GM12878 (cell line): ENCODE measurements at regions of chr10 and their contacts with region 1.

Region 1: DNA sequence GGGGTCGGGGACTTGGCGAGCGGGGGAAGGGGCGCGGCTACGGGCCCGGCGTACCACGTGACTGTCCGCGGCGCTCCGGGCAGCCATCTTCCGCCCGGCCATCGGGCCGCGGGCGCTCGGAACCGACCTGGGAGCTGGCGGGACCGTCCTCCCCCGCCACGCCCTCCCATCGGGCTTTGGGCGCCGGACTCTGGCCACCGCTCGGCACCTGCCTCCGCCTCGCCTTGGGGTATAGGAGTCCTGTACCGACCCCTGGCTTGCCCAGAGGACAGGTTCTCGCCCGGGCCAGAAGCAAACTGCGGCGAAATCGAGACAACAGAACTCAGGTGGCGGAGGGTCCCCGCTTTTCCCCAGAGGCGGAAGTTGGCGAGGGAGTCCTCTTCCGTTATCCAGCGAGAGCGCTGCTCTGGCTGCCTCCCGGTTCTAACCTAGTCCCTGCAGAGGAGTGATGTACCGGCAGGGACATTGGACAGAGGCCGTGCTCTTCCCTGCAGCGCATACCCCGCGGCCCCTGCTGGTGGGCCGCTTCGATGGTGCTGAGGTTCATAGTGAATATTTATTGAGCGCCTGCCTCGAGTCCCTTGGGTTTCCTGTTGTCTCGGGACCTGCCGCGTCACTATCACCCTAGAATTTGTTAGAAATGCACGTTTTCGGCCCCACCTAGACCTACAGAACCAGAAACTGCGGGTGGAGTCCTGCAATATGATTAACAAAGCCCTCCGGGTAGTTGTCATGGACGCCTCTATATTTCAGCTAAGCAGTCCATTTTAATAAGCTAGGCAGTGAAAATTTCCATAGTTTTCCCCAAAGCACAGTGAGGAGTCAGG is 1.3 kb upstream of the SGMS1 start:
- DNase-seq: no peak
- ATAC-seq: peak; percentile 69
- H3K4me3 ChIP-seq: peak overlapping the region; percentile 86
- H3K27ac ChIP-seq: peak overlapping the region; percentile 94
- H3K4me1 ChIP-seq: no peaks in the 10 kb centered on the region
- H3K27me3 ChIP-seq: no peaks in the 10 kb centered on the region
- CTCF ChIP-seq: peak; percentile 52 to 70 (median 56)
- EP300 ChIP-seq: no peak
- POLR2A ChIP-seq: peak; percentile 89
- RAD21 ChIP-seq: peak; percentile 52

Region 2: GRCh38 chr10:50362547-50363125 is 262.4 kb before region 1 on chr10:
- CTCF ChIA-PET with region 1: interaction called, 13 read pairs
- POLR2A ChIA-PET with region 1: interaction called, 5 read pairs
- RAD21 ChIA-PET with region 1: interaction called, 10 read pairs
- SMC1A ChIA-PET with region 1: interaction called, 7 read pairs
- in situ Hi-C with region 1: no loop called
- intact Hi-C with region 1: loop called (anchors 5 kb)
- DNase-seq: peak; percentile 79
- ATAC-seq: peak; percentile 90
- H3K4me3 ChIP-seq: peak overlapping the region; percentile 36
- H3K27ac ChIP-seq: peak overlapping the region; percentile 88
- H3K4me1 ChIP-seq: peaks cover 25% of the 10 kb centered on the region
- H3K27me3 ChIP-seq: no peaks in the 10 kb centered on the region
- CTCF ChIP-seq: no peak
- EP300 ChIP-seq: peak in 1 of 2 experiments; percentile 50; a peak in 1 of 4 replicates
- POLR2A ChIP-seq: no peak
- RAD21 ChIP-seq: no peak

Region 3: GRCh38 chr10:50540069-50540825 is 84.8 kb before region 1 on chr10:
- CTCF ChIA-PET with region 1: interaction called, 5 read pairs
- POLR2A ChIA-PET with region 1: interaction called, 6 read pairs
- RAD21 ChIA-PET with region 1: interaction called, 9 read pairs
- SMC1A ChIA-PET with region 1: interaction called, 26 read pairs
- in situ Hi-C with region 1: no loop called
- intact Hi-C with region 1: loop called (anchors 2 kb)
- DNase-seq: no peak
- ATAC-seq: peak; percentile 72
- H3K4me3 ChIP-seq: peak overlapping the region; percentile 42; the same call in 1 of the 2 replicates
- H3K27ac ChIP-seq: peak overlapping the region; percentile 86
- H3K4me1 ChIP-seq: peaks cover 51% of the 10 kb centered on the region
- H3K27me3 ChIP-seq: no peaks in the 10 kb centered on the region
- CTCF ChIP-seq: no peak
- EP300 ChIP-seq: peak in 1 of 2 experiments; percentile 36; a peak in 2 of 4 replicates
- POLR2A ChIP-seq: no peak
- RAD21 ChIP-seq: no peak

Region 4: GRCh38 chr10:50577681-50578350 is 47.3 kb before region 1 on chr10:
- CTCF ChIA-PET with region 1: interaction called, 5 read pairs
- POLR2A ChIA-PET with region 1: interaction called, 6 read pairs
- RAD21 ChIA-PET with region 1: interaction called, 14 read pairs
- SMC1A ChIA-PET with region 1: interaction called, 12 read pairs
- in situ Hi-C with region 1: no loop called
- intact Hi-C with region 1: no loop called
- DNase-seq: no peak
- ATAC-seq: peak; percentile 52
- H3K4me3 ChIP-seq: no peak overlapping the region
- H3K27ac ChIP-seq: no peak overlapping the region
- H3K4me1 ChIP-seq: no peaks in the 10 kb centered on the region
- H3K27me3 ChIP-seq: no peaks in the 10 kb centered on the region
- CTCF ChIP-seq: no peak
- EP300 ChIP-seq: no peak
- POLR2A ChIP-seq: no peak
- RAD21 ChIP-seq: no peak

Region 5: GRCh38 chr10:50645236-50645635 is 20.2 kb after region 1 on chr10:
- CTCF ChIA-PET with region 1: interaction called, 5 read pairs
- POLR2A ChIA-PET with region 1: interaction called, 5 read pairs
- RAD21 ChIA-PET with region 1: interaction called, 24 read pairs
- SMC1A ChIA-PET with region 1: interaction called, 32 read pairs
- in situ Hi-C with region 1: no loop called
- intact Hi-C with region 1: loop called (anchors 1 kb)
- DNase-seq: no peak
- ATAC-seq: no peak
- H3K4me3 ChIP-seq: no peak overlapping the region
- H3K27ac ChIP-seq: no peak overlapping the region
- H3K4me1 ChIP-seq: peaks cover 16% of the 10 kb centered on the region
- H3K27me3 ChIP-seq: no peaks in the 10 kb centered on the region
- CTCF ChIP-seq: no peak
- EP300 ChIP-seq: no peak
- POLR2A ChIP-seq: no peak
- RAD21 ChIP-seq: no peak

Region 6: GRCh38 chr10:51583976-51584375 is 958.9 kb after region 1 on chr10:
- CTCF ChIA-PET with region 1: no interaction called
- POLR2A ChIA-PET with region 1: no interaction called
- RAD21 ChIA-PET with region 1: no interaction called
- SMC1A ChIA-PET with region 1: no interaction called
- in situ Hi-C with region 1: no loop called
- intact Hi-C with region 1: no loop called
- DNase-seq: no peak
- ATAC-seq: no peak
- H3K4me3 ChIP-seq: no peak overlapping the region
- H3K27ac ChIP-seq: no peak overlapping the region
- H3K4me1 ChIP-seq: no peaks in the 10 kb centered on the region
- H3K27me3 ChIP-seq: no peaks in the 10 kb centered on the region
- CTCF ChIP-seq: no peak
- EP300 ChIP-seq: no peak
- POLR2A ChIP-seq: no peak
- RAD21 ChIP-seq: no peak